Naive thymus-derived CD4-positive, alpha-beta T cell (primary cell): ENCODE measurements at regions of chr4 and their contacts with region 1.

Region 1: GRCh38 chr4:47463235-47463956 is at the start of gene COMMD8:
- DNase-seq: peak; percentile 91 to 97 (median 95)
- ATAC-seq: peak; percentile 93
- H3K4me3 ChIP-seq: peak within 1 kb of the TSS; percentile 82
- H3K4me3 Mint-ChIP-seq: peak within 1 kb of the TSS; percentile 77 to 93 (median 90)
- H3K27ac ChIP-seq: peak within 1 kb of the TSS; percentile 74
- H3K27ac Mint-ChIP-seq: peak within 1 kb of the TSS; percentile 76 to 97 (median 95)
- H3K4me1 ChIP-seq: peaks cover 9 to 17% of the 10 kb centered on the region in 2 donors
- H3K4me1 Mint-ChIP-seq: peaks cover 20 to 48% (median 38%) of the 10 kb centered on the region in 7 donors
- H3K27me3 ChIP-seq: no peaks in the 10 kb centered on the region
- H3K27me3 Mint-ChIP-seq: no peaks in the 10 kb centered on the region
- total RNA-seq, gene COMMD8: 8.4 to 19.3 (median 16.7) TPM

Region 2: DNA sequence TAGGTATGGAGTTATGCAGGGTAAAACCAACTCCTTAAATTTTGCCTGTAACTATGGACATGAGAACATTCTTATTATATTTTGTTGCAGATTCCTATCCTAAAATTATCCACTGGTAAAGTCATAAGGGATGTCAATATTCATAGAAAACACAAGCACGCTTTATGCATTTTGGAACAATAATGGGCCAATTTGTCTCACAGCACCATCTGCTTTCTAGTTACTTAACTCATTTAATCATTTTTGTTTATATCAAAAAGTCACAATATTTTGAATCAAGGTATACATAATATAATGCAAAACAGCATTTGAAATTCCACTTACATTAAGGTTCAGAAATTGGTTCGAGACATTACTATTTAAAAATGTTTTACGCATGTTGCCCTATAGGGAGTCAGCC is 1542.5 kb before region 1 on chr4:
- CTCF ChIA-PET with region 1: no interaction called
- POLR2A ChIA-PET with region 1: no interaction called
- intact Hi-C with region 1: no loop called
- DNase-seq: no peak
- ATAC-seq: no peak
- H3K4me3 ChIP-seq: no peak overlapping the region
- H3K4me3 Mint-ChIP-seq: no peak overlapping the region
- H3K27ac ChIP-seq: no peak overlapping the region
- H3K27ac Mint-ChIP-seq: no peak overlapping the region
- H3K4me1 ChIP-seq: no peaks in the 10 kb centered on the region
- H3K4me1 Mint-ChIP-seq: no peaks in the 10 kb centered on the region
- H3K27me3 ChIP-seq: no peaks in the 10 kb centered on the region
- H3K27me3 Mint-ChIP-seq: no peaks in the 10 kb centered on the region

Region 3: GRCh38 chr4:47010912-47011446 is 452.4 kb before region 1 on chr4:
- CTCF ChIA-PET with region 1: no interaction called
- POLR2A ChIA-PET with region 1: no interaction called
- intact Hi-C with region 1: loop called in 1 of 2 experiments (anchors 10 kb)
- DNase-seq: peak in 5 of 9 donors; percentile 5 to 28 (median 24)
- ATAC-seq: peak; percentile 60
- H3K4me3 ChIP-seq: peak overlapping the region; percentile 39
- H3K4me3 Mint-ChIP-seq: peak overlapping the region; percentile 53 to 82 (median 65)
- H3K27ac ChIP-seq: no peak overlapping the region
- H3K27ac Mint-ChIP-seq: peak overlapping the region; percentile 50 to 86 (median 76)
- H3K4me1 ChIP-seq: peaks cover 9 to 13% of the 10 kb centered on the region in 2 donors
- H3K4me1 Mint-ChIP-seq: peaks cover 10 to 35% (median 24%) of the 10 kb centered on the region in 7 donors
- H3K27me3 ChIP-seq: no peaks in the 10 kb centered on the region
- H3K27me3 Mint-ChIP-seq: no peaks in the 10 kb centered on the region

Region 4: GRCh38 chr4:47451657-47452056 is 11.7 kb before region 1 on chr4:
- CTCF ChIA-PET with region 1: no interaction called
- POLR2A ChIA-PET with region 1: interaction called, 3 read pairs
- intact Hi-C with region 1: loop called in 1 of 2 experiments (anchors 1 kb)
- DNase-seq: no peak
- ATAC-seq: no peak
- H3K4me3 ChIP-seq: no peak overlapping the region
- H3K4me3 Mint-ChIP-seq: no peak overlapping the region
- H3K27ac ChIP-seq: no peak overlapping the region
- H3K27ac Mint-ChIP-seq: peak overlapping the region in 3 of 9 donors; percentile 7 to 48 (median 13)
- H3K4me1 ChIP-seq: peaks cover 0 to 6% of the 10 kb centered on the region in 2 donors
- H3K4me1 Mint-ChIP-seq: peaks cover 0 to 11% (median 7%) of the 10 kb centered on the region in 7 donors
- H3K27me3 ChIP-seq: no peaks in the 10 kb centered on the region
- H3K27me3 Mint-ChIP-seq: no peaks in the 10 kb centered on the region

Region 5: GRCh38 chr4:47485047-47485692 is 21.8 kb after region 1 on chr4 and contains the start of gene ATP10D:
- CTCF ChIA-PET with region 1: interaction called, 3 read pairs
- POLR2A ChIA-PET with region 1: interaction called, 28 read pairs
- intact Hi-C with region 1: loop called (anchors 1 kb)
- DNase-seq: peak; percentile 56 to 77 (median 66)
- ATAC-seq: peak; percentile 97
- H3K4me3 ChIP-seq: peak within 1 kb of the TSS; percentile 75
- H3K4me3 Mint-ChIP-seq: peak within 1 kb of the TSS; percentile 87 to 98 (median 94)
- H3K27ac ChIP-seq: peak within 1 kb of the TSS; percentile 70
- H3K27ac Mint-ChIP-seq: peak within 1 kb of the TSS; percentile 78 to 97 (median 89)
- H3K4me1 ChIP-seq: peaks cover 7 to 9% of the 10 kb centered on the region in 2 donors
- H3K4me1 Mint-ChIP-seq: peaks cover 15 to 36% (median 26%) of the 10 kb centered on the region in 7 donors
- H3K27me3 ChIP-seq: no peaks in the 10 kb centered on the region
- H3K27me3 Mint-ChIP-seq: peaks cover 0 to 5% (median 0%) of the 10 kb centered on the region in 5 donors
- total RNA-seq, gene ATP10D: 3.3 to 29.0 (median 6.1) TPM

Region 6: GRCh38 chr4:47499700-47500099 is 36.3 kb after region 1 on chr4:
- CTCF ChIA-PET with region 1: no interaction called
- POLR2A ChIA-PET with region 1: no interaction called
- intact Hi-C with region 1: no loop called
- DNase-seq: no peak
- ATAC-seq: no peak
- H3K4me3 ChIP-seq: no peak overlapping the region
- H3K4me3 Mint-ChIP-seq: no peak overlapping the region
- H3K27ac ChIP-seq: no peak overlapping the region
- H3K27ac Mint-ChIP-seq: no peak overlapping the region
- H3K4me1 ChIP-seq: no peaks in the 10 kb centered on the region
- H3K4me1 Mint-ChIP-seq: no peaks in the 10 kb centered on the region
- H3K27me3 ChIP-seq: no peaks in the 10 kb centered on the region
- H3K27me3 Mint-ChIP-seq: no peaks in the 10 kb centered on the region

Region 7: GRCh38 chr4:47531241-47531953 is 68.0 kb after region 1 on chr4:
- CTCF ChIA-PET with region 1: no interaction called
- POLR2A ChIA-PET with region 1: no interaction called
- intact Hi-C with region 1: loop called (anchors 1 kb)
- DNase-seq: peak; percentile 7 to 60 (median 42)
- ATAC-seq: peak; percentile 97
- H3K4me3 ChIP-seq: peak overlapping the region; percentile 40
- H3K4me3 Mint-ChIP-seq: peak overlapping the region; percentile 37 to 76 (median 68)
- H3K27ac ChIP-seq: no peak overlapping the region
- H3K27ac Mint-ChIP-seq: peak overlapping the region in 7 of 9 donors; percentile 3 to 76 (median 57)
- H3K4me1 ChIP-seq: peaks cover 25 to 42% of the 10 kb centered on the region in 2 donors
- H3K4me1 Mint-ChIP-seq: peaks cover 32 to 54% (median 44%) of the 10 kb centered on the region in 7 donors
- H3K27me3 ChIP-seq: no peaks in the 10 kb centered on the region
- H3K27me3 Mint-ChIP-seq: no peaks in the 10 kb centered on the region

Region 8: DNA sequence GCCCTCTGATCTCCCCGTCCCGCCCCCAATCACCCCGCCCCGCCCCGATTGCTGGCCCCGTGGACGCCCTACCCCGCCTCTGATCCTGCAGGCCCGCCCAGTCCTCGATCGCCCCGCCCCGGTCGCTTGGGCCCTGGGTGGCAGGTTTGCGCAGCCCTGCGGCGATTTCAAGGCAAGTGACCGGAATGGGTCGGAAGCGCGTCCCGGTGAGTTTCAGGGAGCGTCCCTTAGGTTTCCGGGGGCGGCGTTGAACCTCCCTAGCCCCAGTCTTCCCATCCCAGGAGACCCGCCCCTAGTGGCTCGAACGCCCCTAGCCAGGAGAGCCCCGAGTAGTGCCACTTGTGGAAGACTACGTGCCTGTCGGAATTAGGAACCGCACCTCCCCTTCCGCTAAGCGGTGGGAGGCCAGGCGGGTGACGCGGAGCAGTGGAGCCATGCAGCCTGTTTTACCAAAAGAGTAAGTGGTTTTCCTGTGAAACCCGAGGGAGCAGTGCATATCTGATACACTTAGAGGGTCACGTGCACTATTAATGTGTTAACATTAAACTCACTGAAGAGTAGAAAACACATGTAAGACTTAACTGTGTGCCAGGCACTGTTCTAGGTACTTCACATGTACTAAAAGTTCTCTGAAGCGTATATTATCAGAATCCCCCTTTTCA is 806.6 kb after region 1 on chr4:
- CTCF ChIA-PET with region 1: no interaction called
- POLR2A ChIA-PET with region 1: no interaction called
- intact Hi-C with region 1: loop called in 1 of 2 experiments (anchors 10 kb)
- DNase-seq: peak; percentile 48 to 88 (median 69)
- ATAC-seq: peak; percentile 95
- H3K4me3 ChIP-seq: peak overlapping the region; percentile 88
- H3K4me3 Mint-ChIP-seq: peak overlapping the region; percentile 95 to 98 (median 97)
- H3K27ac ChIP-seq: peak overlapping the region; percentile 73
- H3K27ac Mint-ChIP-seq: peak overlapping the region; percentile 20 to 94 (median 86)
- H3K4me1 ChIP-seq: peaks cover 0 to 6% of the 10 kb centered on the region in 2 donors
- H3K4me1 Mint-ChIP-seq: peaks cover 6 to 28% (median 22%) of the 10 kb centered on the region in 7 donors
- H3K27me3 ChIP-seq: no peaks in the 10 kb centered on the region
- H3K27me3 Mint-ChIP-seq: no peaks in the 10 kb centered on the region

Region 9: GRCh38 chr4:48830706-48831531 is 1367.5 kb after region 1 on chr4 and contains the start of gene OCIAD1:
- CTCF ChIA-PET with region 1: no interaction called
- POLR2A ChIA-PET with region 1: no interaction called
- intact Hi-C with region 1: loop called in 1 of 2 experiments (anchors 2 kb)
- DNase-seq: peak; percentile 80 to 98 (median 93)
- ATAC-seq: peak; percentile 98
- H3K4me3 ChIP-seq: peak within 1 kb of the TSS; percentile 98
- H3K4me3 Mint-ChIP-seq: peak within 1 kb of the TSS; percentile 96 to 100 (median 100)
- H3K27ac ChIP-seq: peak within 1 kb of the TSS; percentile 91
- H3K27ac Mint-ChIP-seq: peak within 1 kb of the TSS; percentile 98 to 100 (median 100)
- H3K4me1 ChIP-seq: peaks cover 10 to 12% of the 10 kb centered on the region in 2 donors
- H3K4me1 Mint-ChIP-seq: peaks cover 10 to 44% (median 36%) of the 10 kb centered on the region in 7 donors
- H3K27me3 ChIP-seq: no peaks in the 10 kb centered on the region
- H3K27me3 Mint-ChIP-seq: peaks cover 0 to 4% (median 4%) of the 10 kb centered on the region in 5 donors
- total RNA-seq, gene OCIAD1: 85.6 to 128 (median 102) TPM